ENCODE measurements at regions of chr3 and their contacts with region 1.

Region 1: DNA sequence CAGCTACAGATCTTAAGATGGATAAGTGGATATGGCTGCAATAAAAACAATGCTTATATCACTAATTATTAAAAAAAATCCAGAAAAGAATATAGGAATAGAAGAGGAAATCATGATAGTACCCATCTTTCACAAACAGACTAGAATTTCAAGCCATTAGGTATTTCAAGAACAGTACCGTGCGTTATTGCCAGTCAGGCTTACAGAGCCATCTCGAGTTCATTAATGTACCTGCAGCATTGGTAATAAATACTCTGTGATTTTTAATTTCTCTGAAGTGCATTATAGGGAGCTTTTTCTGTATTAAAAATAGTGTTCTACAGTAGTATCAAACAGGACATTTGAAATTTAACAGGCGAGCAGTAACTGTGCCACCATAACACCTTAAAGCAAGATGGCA is 35.7 kb downstream of the ST3GAL6 start:
- DNase-seq: no peak

Region 2: GRCh38 chr3:98593046-98593936 is 205.5 kb before region 1 on chr3 and contains the start of gene CPOX:
- intact Hi-C with region 1: loop called in 1 of 2 experiments (anchors 10 kb)
- DNase-seq: peak; percentile 97
- total RNA-seq, gene CPOX: 12.2 to 12.7 TPM

Region 3: GRCh38 chr3:98763076-98763475 is 35.7 kb before region 1 on chr3 and contains the start of gene ST3GAL6:
- intact Hi-C with region 1: no loop called
- DNase-seq: no peak
- total RNA-seq, gene ST3GAL6: 6.8 to 7.5 TPM

Region 4: GRCh38 chr3:98812851-98813374 is 14.1 kb after region 1 on chr3:
- intact Hi-C with region 1: no loop called
- DNase-seq: no peak